ENCODE measurements at regions of chr1 and their contacts with region 1.

Region 1: GRCh38 chr1:40224040-40224439 is 23.7 kb upstream of the TMCO2 start:
- DNase-seq: no peak
- H3K4me3 Mint-ChIP-seq: no peak overlapping the region
- H3K27ac Mint-ChIP-seq: peak overlapping the region; percentile 43
- H3K4me1 Mint-ChIP-seq: peaks cover 26% of the 10 kb centered on the region
- H3K27me3 Mint-ChIP-seq: no peaks in the 10 kb centered on the region

Region 2: DNA sequence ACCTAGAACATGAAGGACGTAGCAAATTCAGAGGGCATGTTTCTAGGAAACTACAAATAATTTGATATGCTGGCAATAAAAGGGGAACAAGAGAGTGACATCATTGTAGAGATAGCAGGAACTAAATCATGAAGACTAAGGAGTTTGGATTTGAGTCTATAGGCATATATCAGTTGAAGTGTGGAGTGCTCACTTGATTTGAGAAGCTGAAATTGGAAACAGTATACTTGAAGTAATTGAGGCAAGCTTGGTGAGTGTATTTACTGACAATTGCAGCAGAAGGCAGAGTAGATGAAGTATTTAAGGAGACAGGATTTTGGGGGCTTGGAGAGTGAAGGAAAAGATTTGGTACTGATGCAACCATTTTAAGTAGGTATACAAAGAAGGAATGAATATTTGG is 17.3 kb after region 1 on chr1:
- intact Hi-C with region 1: loop called (anchors 1 kb)
- DNase-seq: no peak
- H3K4me3 Mint-ChIP-seq: peak overlapping the region; percentile 23
- H3K27ac Mint-ChIP-seq: peak overlapping the region; percentile 94
- H3K4me1 Mint-ChIP-seq: peaks cover 77% of the 10 kb centered on the region
- H3K27me3 Mint-ChIP-seq: no peaks in the 10 kb centered on the region

Region 3: GRCh38 chr1:40264354-40264781 is 40.3 kb after region 1 on chr1:
- intact Hi-C with region 1: loop called (anchors 1 kb)
- DNase-seq: no peak
- H3K4me3 Mint-ChIP-seq: peak overlapping the region; percentile 58
- H3K27ac Mint-ChIP-seq: peak overlapping the region; percentile 88
- H3K4me1 Mint-ChIP-seq: peaks cover 53% of the 10 kb centered on the region
- H3K27me3 Mint-ChIP-seq: no peaks in the 10 kb centered on the region